ENCODE measurements at regions of chr18 and their contacts with region 1.

Region 1: DNA sequence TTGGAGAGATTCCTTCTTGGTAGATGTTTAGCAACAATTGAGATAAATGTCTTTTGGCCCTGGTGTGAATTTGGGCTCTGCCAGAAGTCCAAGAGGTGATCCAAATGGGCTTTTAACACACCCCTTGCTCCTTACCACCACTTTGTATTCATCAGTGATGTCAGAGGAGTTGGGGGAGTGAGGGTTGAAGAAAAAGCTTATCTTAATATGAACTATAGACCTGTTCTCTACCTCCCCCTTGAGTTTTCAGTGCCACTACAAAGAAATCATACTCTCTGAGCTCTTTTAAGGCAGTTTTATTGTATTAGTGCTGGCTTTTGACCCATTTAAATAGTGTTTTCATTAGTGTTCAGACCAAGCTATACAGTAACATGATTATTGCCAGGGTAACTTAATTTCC is 229.1 kb downstream of the PHLPP1 start:
- DNase-seq: no peak
- H3K4me3 ChIP-seq: no peak overlapping the region
- H3K4me3 Mint-ChIP-seq: no peak overlapping the region
- H3K27ac ChIP-seq: no peak overlapping the region
- H3K27ac Mint-ChIP-seq: no peak overlapping the region
- H3K4me1 ChIP-seq: peaks cover 16% of the 10 kb centered on the region in 2 donors
- H3K4me1 Mint-ChIP-seq: peaks cover 18% of the 10 kb centered on the region
- H3K27me3 ChIP-seq: no peaks in the 10 kb centered on the region
- H3K27me3 Mint-ChIP-seq: peaks cover 0 to 2% (median 0%) of the 10 kb centered on the region in 3 donors
- CTCF ChIP-seq: no peak

Region 2: DNA sequence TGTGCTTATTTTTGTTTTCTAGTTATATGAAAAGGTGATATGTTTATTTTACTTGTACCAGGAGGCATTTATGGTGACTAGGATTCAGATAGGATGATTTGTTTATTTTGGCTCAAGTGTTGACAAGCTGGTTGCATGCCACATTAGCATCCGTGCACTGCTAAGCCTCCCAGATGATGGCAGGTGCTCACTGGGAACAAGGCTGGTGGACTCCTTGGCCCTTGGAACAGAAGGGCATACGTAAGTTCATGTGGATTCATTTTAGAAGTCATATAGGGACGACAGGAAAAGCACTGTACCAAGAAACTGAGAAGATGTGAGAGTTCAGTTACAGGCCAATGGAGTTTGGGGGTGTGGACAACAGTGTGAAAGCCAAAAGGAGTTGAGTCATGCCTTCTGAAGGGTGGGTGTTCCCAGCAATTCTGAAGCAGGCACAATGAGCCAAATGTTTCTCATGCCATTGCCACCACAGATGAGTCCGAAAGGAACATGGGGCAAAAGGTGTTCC is 62.9 kb before region 1 on chr18:
- intact Hi-C with region 1: loop called in 1 of 2 experiments (anchors 10 kb)
- DNase-seq: no peak
- H3K4me3 ChIP-seq: no peak overlapping the region
- H3K4me3 Mint-ChIP-seq: no peak overlapping the region
- H3K27ac ChIP-seq: no peak overlapping the region
- H3K27ac Mint-ChIP-seq: no peak overlapping the region
- H3K4me1 ChIP-seq: no peaks in the 10 kb centered on the region
- H3K4me1 Mint-ChIP-seq: peaks cover 3% of the 10 kb centered on the region
- H3K27me3 ChIP-seq: no peaks in the 10 kb centered on the region
- H3K27me3 Mint-ChIP-seq: peaks cover 0 to 1% (median 0%) of the 10 kb centered on the region in 3 donors
- CTCF ChIP-seq: no peak

Region 3: DNA sequence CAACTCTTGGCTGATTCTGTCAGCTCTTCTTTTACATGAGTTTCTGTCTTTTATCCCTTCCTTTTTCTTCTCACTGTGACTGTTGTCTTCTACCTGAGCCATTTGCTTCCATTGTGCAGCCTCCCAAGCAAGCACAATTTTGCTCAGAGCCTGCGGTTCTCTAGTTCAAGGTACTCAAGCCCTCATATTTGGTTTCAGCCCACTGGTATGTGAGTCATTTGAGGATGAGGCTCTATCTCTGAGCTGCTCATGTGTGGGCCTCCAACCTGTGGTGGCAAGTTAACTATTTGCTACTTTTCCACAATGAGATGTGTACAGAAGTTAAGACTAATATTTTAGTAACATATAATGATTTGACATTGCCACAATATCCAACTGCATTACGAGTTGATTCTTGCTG is 46.1 kb before region 1 on chr18:
- intact Hi-C with region 1: no loop called
- DNase-seq: no peak
- H3K4me3 ChIP-seq: no peak overlapping the region
- H3K4me3 Mint-ChIP-seq: no peak overlapping the region
- H3K27ac ChIP-seq: no peak overlapping the region
- H3K27ac Mint-ChIP-seq: peak overlapping the region in 1 of 7 donors; percentile 61
- H3K4me1 ChIP-seq: no peaks in the 10 kb centered on the region
- H3K4me1 Mint-ChIP-seq: no peaks in the 10 kb centered on the region
- H3K27me3 ChIP-seq: no peaks in the 10 kb centered on the region
- H3K27me3 Mint-ChIP-seq: no peaks in the 10 kb centered on the region
- CTCF ChIP-seq: no peak

Region 4: GRCh38 chr18:63329431-63330145 is 385.1 kb after region 1 on chr18:
- intact Hi-C with region 1: no loop called
- DNase-seq: no peak
- H3K4me3 ChIP-seq: no peak overlapping the region
- H3K4me3 Mint-ChIP-seq: no peak overlapping the region
- H3K27ac ChIP-seq: no peak overlapping the region
- H3K27ac Mint-ChIP-seq: no peak overlapping the region
- H3K4me1 ChIP-seq: no peaks in the 10 kb centered on the region
- H3K4me1 Mint-ChIP-seq: no peaks in the 10 kb centered on the region
- H3K27me3 ChIP-seq: no peaks in the 10 kb centered on the region
- H3K27me3 Mint-ChIP-seq: peaks cover 0 to 3% (median 0%) of the 10 kb centered on the region in 3 donors
- CTCF ChIP-seq: no peak

Measured in CD14-positive monocyte (primary cell).